ENCODE measurements at regions of chr7 and their contacts with region 1.

Region 1: GRCh38 chr7:155003376-155004214 is 671 bp upstream of the PAXIP1 start:
- DNase-seq: peak; percentile 66
- H3K4me3 ChIP-seq: peak overlapping the region; percentile 93 to 99 (median 93)
- H3K27ac ChIP-seq: peak overlapping the region; percentile 78
- H3K4me1 ChIP-seq: no peaks in the 10 kb centered on the region
- H3K27me3 ChIP-seq: no peaks in the 10 kb centered on the region
- CTCF ChIP-seq: no peak

Region 2: DNA sequence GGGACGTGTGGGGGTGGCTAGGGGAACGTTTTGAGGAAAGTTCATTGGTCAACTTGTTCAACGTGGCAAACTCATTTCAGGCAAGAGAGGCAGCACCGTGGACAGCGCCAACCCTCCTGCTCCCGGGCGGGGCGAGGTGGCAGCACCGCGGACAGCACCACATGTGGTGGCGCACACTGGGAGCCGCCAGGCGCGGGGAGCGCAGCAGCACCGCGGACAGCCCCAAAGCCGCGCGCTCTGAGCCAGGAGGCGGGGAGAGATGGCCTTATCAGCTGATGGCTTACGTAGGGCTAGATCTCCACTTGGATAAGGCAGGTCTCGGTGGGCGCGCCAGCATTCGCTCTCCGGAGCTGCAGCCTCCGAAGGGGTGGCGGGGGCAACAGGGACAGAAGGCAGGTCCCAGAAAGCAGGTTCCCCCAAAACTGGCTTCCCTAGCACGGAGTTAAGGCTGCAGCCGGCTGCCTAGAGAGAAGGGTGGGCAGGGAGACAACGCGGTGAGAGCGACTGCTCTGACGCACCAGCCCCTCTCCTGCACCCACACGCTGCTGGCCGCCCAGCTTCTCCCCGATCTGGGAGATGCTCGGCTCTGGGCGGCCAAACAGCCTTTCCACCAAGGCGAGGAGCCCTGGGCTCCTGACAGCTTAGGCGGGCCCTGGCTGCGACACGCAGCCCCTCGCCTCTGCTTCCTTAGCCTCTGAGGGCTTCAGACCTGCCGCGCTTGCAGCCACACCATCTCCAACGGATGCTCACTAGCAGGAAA is 66.6 kb after region 1 on chr7 and contains the start of gene HTR5A:
- CTCF ChIA-PET with region 1: no interaction called
- dilution Hi-C with region 1: no loop called
- in situ Hi-C with region 1: no loop called
- intact Hi-C with region 1: loop called (anchors 5 kb)
- DNase-seq: peak; percentile 77
- H3K4me3 ChIP-seq: no peak within 1 kb of the TSS
- H3K27ac ChIP-seq: no peak within 1 kb of the TSS
- H3K4me1 ChIP-seq: peaks cover 3% of the 10 kb centered on the region
- H3K27me3 ChIP-seq: peaks cover 5% of the 10 kb centered on the region
- CTCF ChIP-seq: no peak
- total RNA-seq, gene HTR5A: not detected

Region 3: GRCh38 chr7:155190688-155191087 is 187.1 kb after region 1 on chr7:
- CTCF ChIA-PET with region 1: no interaction called
- dilution Hi-C with region 1: no loop called
- in situ Hi-C with region 1: no loop called
- intact Hi-C with region 1: loop called (anchors 10 kb)
- DNase-seq: no peak
- H3K4me3 ChIP-seq: peak overlapping the region in 1 of 3 experiments; percentile 0
- H3K27ac ChIP-seq: no peak overlapping the region
- H3K4me1 ChIP-seq: no peaks in the 10 kb centered on the region
- H3K27me3 ChIP-seq: no peaks in the 10 kb centered on the region
- CTCF ChIP-seq: peak; percentile 81 to 94

Region 4: GRCh38 chr7:155205368-155206317 is 202.0 kb after region 1 on chr7:
- CTCF ChIA-PET with region 1: no interaction called
- dilution Hi-C with region 1: no loop called
- in situ Hi-C with region 1: no loop called
- intact Hi-C with region 1: loop called (anchors 5 kb)
- DNase-seq: peak; percentile 95
- H3K4me3 ChIP-seq: no peak overlapping the region
- H3K27ac ChIP-seq: peak overlapping the region; percentile 49
- H3K4me1 ChIP-seq: peaks cover 11% of the 10 kb centered on the region
- H3K27me3 ChIP-seq: no peaks in the 10 kb centered on the region
- CTCF ChIP-seq: no peak

Region 5: GRCh38 chr7:155344600-155345433 is 341.2 kb after region 1 on chr7:
- CTCF ChIA-PET with region 1: no interaction called
- dilution Hi-C with region 1: no loop called
- in situ Hi-C with region 1: no loop called
- intact Hi-C with region 1: loop called (anchors 5 kb)
- DNase-seq: peak; percentile 41
- H3K4me3 ChIP-seq: peak overlapping the region in 2 of 3 experiments; percentile 36 to 54
- H3K27ac ChIP-seq: no peak overlapping the region
- H3K4me1 ChIP-seq: no peaks in the 10 kb centered on the region
- H3K27me3 ChIP-seq: no peaks in the 10 kb centered on the region
- CTCF ChIP-seq: peak; percentile 56 to 70